CD8-positive, alpha-beta memory T cell (primary cell): ENCODE measurements at regions of chr3 and their contacts with region 1.

Region 1: GRCh38 chr3:151183265-151183671 is 19.7 kb downstream of the GPR171 start:
- DNase-seq: peak in 1 of 5 donors; percentile 42
- H3K4me3 ChIP-seq: no peak overlapping the region
- H3K4me3 Mint-ChIP-seq: peak overlapping the region; percentile 33 to 78 (median 72)
- H3K27ac ChIP-seq: no peak overlapping the region
- H3K27ac Mint-ChIP-seq: peak overlapping the region; percentile 3 to 96 (median 88)
- H3K4me1 ChIP-seq: peaks cover 15% of the 10 kb centered on the region
- H3K4me1 Mint-ChIP-seq: peaks cover 30 to 40% (median 38%) of the 10 kb centered on the region in 3 donors
- H3K27me3 ChIP-seq: no peaks in the 10 kb centered on the region
- H3K27me3 Mint-ChIP-seq: peaks cover 0 to 4% of the 10 kb centered on the region in 2 donors

Region 2: DNA sequence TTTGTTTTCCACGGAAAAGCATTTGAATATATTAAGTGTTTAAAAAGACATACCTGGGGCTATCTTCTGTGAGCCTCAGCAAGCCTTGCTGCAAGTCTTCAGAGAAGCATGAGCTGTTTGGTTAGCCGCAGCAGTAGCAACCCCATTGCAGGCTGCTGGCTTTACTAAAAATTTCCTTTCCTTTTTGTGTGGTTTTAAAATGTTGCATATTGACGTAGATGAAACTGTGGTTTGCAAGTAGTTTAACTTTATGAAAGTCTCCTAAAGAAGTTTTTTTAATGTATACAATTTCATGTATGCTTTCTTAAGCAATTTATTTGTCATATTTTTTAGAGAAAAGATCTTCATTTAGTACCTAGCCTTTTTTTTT is 19.8 kb after region 1 on chr3 and contains the start of gene GPR171:
- CTCF ChIA-PET with region 1: interaction called, 8 read pairs
- POLR2A ChIA-PET with region 1: interaction called, 22 read pairs
- DNase-seq: peak; percentile 46 to 86 (median 82)
- H3K4me3 ChIP-seq: peak within 1 kb of the TSS; percentile 54
- H3K4me3 Mint-ChIP-seq: peak within 1 kb of the TSS; percentile 78 to 97 (median 88)
- H3K27ac ChIP-seq: peak within 1 kb of the TSS; percentile 62
- H3K27ac Mint-ChIP-seq: peak within 1 kb of the TSS; percentile 91 to 97 (median 94)
- H3K4me1 ChIP-seq: peaks cover 71% of the 10 kb centered on the region
- H3K4me1 Mint-ChIP-seq: peaks cover 65 to 84% (median 76%) of the 10 kb centered on the region in 3 donors
- H3K27me3 ChIP-seq: no peaks in the 10 kb centered on the region
- H3K27me3 Mint-ChIP-seq: no peaks in the 10 kb centered on the region
- total RNA-seq, gene GPR171: 179 to 188 TPM

Region 3: GRCh38 chr3:151259664-151260063 is 76.4 kb after region 1 on chr3:
- CTCF ChIA-PET with region 1: no interaction called
- POLR2A ChIA-PET with region 1: no interaction called
- DNase-seq: no peak
- H3K4me3 ChIP-seq: no peak overlapping the region
- H3K4me3 Mint-ChIP-seq: no peak overlapping the region
- H3K27ac ChIP-seq: no peak overlapping the region
- H3K27ac Mint-ChIP-seq: peak overlapping the region in 2 of 8 donors; percentile 31 to 39
- H3K4me1 ChIP-seq: no peaks in the 10 kb centered on the region
- H3K4me1 Mint-ChIP-seq: no peaks in the 10 kb centered on the region
- H3K27me3 ChIP-seq: no peaks in the 10 kb centered on the region
- H3K27me3 Mint-ChIP-seq: peaks cover 4 to 17% of the 10 kb centered on the region in 2 donors